Activated T-helper 1 cell treated with anti-CD3 and anti-CD28 coated beads, Interleukin-12 subunit alpha, Interleukin-12 subunit beta, Interleukin-2, Interleukin-4 antibody, amounts not matched to agents 30 ng/mL and 10 ng/mL and 1 ng/mL, durations not matched to agents 14 hours and 24 hours and 36 hours (primary cell): ENCODE measurements at regions of chr2 and their contacts with region 1.

Region 1: GRCh38 chr2:42169100-42169873 is at the start of gene EML4:
- DNase-seq: peak; percentile 88
- H3K4me3 Mint-ChIP-seq: no peak within 1 kb of the TSS
- H3K27ac Mint-ChIP-seq: peak within 1 kb of the TSS; percentile 71
- H3K4me1 Mint-ChIP-seq: peaks cover 9% of the 10 kb centered on the region
- H3K27me3 Mint-ChIP-seq: peaks cover under 1% of the 10 kb centered on the region
- total RNA-seq, gene EML4: 56.7 and 58.9 TPM in 2 replicates

Region 2: DNA sequence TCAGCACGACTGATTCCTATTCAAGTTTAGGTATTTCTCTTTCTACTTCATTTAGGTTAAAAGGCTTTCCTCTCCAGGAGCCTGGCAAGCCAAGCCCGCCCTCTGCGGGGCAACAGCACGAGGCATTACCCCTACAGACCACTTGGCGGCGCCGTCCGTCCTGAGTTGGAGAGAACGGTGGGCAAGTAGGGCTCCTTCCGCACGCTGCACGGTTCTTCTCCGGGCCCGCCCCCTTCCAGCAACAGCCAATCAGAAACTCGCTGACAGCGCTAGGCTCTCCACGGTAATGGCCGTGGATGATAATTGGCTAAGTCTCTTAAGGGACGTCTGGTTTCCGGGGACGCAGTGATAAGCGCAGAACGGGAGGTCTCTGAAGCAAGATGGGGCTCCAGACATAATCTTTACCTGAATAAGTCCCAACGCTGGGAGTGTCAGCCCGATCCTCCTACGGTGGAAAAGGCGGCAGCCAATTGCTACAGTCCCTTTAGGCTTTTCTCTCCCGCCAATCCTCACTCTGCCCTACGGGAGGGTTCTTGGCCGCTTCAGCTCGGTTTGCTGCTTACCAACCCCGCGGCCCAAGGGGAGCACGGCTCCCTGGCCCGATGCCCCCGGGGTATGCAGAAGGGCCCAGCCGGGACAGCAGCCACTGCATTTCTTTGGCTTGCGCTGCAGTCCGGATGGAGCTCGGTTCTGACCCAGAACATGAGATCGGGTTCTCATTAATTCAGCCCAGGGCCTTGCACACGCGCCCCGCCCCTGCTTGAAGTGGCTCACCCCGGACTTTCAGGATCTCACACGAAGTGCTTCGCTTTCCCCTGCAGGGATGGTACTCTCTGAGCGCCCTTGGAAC is 328.4 kb before region 1 on chr2:
- intact Hi-C with region 1: loop called (anchors 2 kb)
- DNase-seq: peak; percentile 93
- H3K4me3 Mint-ChIP-seq: peak overlapping the region; percentile 96
- H3K27ac Mint-ChIP-seq: peak overlapping the region; percentile 83
- H3K4me1 Mint-ChIP-seq: peaks cover 8% of the 10 kb centered on the region
- H3K27me3 Mint-ChIP-seq: peaks cover 11% of the 10 kb centered on the region

Region 3: GRCh38 chr2:42102024-42102590 is 67.2 kb before region 1 on chr2:
- intact Hi-C with region 1: loop called (anchors 1 kb)
- DNase-seq: peak; percentile 92
- H3K4me3 Mint-ChIP-seq: peak overlapping the region; percentile 73
- H3K27ac Mint-ChIP-seq: peak overlapping the region; percentile 94
- H3K4me1 Mint-ChIP-seq: peaks cover 45% of the 10 kb centered on the region
- H3K27me3 Mint-ChIP-seq: no peaks in the 10 kb centered on the region

Region 4: DNA sequence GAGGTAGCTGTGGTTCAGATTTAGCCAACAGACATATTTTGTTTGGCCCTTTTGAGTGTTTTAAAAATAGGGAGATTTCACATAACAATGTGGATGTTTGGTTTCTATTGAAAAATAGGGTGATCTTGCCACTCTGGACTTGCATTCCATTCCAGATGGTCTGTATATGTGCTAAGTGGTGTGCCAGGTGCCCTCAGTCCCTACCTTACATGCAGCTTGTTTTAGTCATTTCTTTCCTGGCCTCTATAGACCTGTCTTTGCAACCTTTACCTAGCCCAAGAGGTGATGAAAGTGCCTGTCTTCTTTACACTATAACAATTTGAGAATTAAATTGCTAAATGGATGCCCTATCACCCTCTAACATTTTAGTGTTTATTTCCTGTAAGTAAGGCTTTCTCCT is 11.0 kb after region 1 on chr2:
- intact Hi-C with region 1: loop called (anchors 1 kb)
- DNase-seq: no peak
- H3K4me3 Mint-ChIP-seq: no peak overlapping the region
- H3K27ac Mint-ChIP-seq: peak overlapping the region; percentile 2
- H3K4me1 Mint-ChIP-seq: peaks cover 82% of the 10 kb centered on the region
- H3K27me3 Mint-ChIP-seq: no peaks in the 10 kb centered on the region

Region 5: DNA sequence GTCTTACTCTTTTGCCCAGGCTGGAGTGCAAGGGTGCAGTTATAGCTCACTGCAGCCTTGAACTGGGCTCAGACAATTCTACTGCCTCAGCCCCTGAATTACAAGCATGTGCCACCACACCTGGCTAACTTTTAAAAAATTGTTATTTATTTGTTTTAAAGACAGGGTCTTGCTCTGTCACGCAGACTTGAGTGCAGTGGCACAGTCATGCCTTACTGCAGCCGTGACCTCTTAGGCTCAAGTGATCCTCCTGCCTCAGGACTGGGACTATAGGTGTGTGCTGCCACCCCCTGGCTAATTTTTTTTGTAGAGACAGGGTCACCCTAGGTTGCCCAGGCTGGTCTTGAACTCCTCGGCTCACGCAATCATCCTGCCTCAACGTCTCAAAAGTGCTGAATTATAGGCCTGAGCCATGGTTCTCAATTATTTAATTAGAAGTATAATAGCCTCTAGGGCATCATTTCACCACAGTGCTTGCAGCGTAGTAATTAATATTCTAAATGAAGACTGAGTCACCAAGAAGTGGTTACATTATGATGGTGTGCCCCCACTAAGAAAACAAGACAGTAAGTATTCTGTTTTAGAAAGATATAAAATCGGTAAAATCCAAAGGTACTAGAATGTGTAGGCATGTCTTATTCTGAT is 69.5 kb after region 1 on chr2:
- intact Hi-C with region 1: loop called (anchors 2 kb)
- DNase-seq: no peak
- H3K4me3 Mint-ChIP-seq: no peak overlapping the region
- H3K27ac Mint-ChIP-seq: no peak overlapping the region
- H3K4me1 Mint-ChIP-seq: peaks cover 24% of the 10 kb centered on the region
- H3K27me3 Mint-ChIP-seq: no peaks in the 10 kb centered on the region